GM13977 (cell line): ENCODE measurements at regions of chr17 and their contacts with region 1.

Region 1: DNA sequence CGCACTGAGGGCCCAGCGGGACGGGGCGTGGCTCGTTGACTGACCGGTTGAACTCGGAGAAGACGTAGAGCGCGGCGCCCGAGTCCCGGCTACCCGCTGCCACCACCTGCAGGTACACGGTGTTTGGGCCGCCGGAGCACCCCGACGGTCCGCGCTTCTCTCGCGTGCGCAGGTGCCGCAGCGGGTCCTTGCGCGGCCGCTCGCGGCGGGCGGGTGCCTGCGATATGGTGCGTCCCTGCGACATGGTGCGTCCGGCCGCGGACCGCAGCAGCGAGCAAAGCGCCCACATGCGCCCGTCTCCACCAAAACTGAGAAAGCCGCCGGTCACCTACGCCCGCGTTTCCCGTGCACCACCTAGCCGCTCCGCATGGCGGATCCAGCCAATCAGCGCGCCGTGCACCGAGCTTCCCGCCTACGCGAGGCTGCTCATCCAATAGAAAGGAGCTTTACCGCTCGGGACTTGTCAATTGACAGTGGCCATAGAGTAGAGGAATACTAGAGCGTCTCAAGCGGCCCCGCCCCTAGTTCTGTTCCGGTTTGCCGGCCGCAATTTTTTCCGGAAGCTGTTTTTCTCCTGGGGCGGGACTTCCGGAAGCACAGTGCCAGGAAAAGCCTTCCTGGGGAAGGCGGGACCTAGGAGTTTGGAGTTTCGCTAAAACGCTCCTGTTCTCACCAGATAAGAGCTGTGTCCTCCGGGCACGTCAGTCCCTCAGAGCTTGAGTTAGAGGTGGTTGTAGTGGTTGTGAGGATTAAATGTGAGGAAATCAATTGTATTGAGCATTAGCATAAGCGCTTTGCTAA is at the start of gene ELAC2:
- DNase-seq: peak; percentile 97
- CTCF ChIP-seq: no peak

Region 2: DNA sequence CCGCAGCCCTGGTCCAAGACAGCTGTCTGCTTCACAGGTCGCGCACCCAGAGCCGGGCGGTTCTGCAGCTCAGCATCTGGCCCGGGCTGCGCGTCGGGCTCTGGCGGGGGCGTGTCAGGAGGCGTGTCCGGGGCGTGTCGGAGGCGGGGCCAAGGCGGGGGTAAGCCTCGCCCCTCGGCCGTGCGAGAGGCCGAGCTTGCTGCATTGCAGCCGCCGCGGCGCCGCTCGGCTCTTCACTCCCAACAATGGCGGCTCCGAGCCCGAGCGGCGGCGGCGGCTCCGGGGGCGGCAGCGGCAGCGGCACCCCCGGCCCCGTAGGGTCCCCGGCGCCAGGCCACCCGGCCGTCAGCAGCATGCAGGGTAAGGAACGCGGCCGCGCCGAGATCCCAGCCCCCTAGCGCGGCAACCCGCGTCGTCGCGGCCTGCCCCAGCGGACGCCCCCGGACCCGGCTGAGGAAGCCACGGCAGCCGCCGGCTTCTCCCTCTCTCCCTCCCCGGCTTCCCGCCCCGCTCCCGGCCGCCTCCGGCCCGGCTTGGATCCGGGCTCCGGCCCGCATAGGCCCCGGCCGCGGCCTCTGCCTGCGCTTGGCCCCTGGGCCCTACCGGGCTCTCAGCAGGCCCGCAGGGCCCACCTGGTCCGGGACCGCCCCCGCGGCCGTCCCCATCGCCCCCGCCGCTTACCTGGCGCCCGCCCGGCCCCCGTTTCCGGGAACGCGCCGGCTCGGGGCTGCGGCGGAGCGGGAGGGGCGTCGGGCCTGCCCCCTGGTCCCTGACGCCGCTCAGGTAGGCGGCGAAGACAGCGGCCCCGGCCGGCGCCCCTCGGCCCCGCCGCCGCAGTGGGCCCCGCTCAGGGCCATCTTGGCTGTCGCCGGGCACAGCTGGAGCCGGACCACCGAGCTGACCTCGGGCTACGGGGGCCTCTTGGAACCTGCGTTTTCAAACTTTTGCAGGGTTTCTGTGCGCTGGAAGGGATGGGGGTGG is 996.9 kb before region 1 on chr17 and contains the start of gene MAP2K4:
- in situ Hi-C with region 1: loop called (anchors 25 kb)
- DNase-seq: peak; percentile 97
- CTCF ChIP-seq: no peak

Region 3: GRCh38 chr17:12180644-12181261 is 837.1 kb before region 1 on chr17:
- in situ Hi-C with region 1: loop called (anchors 25 kb)
- DNase-seq: peak; percentile 56
- CTCF ChIP-seq: peak; percentile 81

Region 4: GRCh38 chr17:12256380-12256995 is 761.4 kb before region 1 on chr17:
- in situ Hi-C with region 1: loop called (anchors 25 kb)
- DNase-seq: peak; percentile 52
- CTCF ChIP-seq: peak; percentile 75